ENCODE measurements at regions of chr3 and their contacts with region 1.

Region 1: DNA sequence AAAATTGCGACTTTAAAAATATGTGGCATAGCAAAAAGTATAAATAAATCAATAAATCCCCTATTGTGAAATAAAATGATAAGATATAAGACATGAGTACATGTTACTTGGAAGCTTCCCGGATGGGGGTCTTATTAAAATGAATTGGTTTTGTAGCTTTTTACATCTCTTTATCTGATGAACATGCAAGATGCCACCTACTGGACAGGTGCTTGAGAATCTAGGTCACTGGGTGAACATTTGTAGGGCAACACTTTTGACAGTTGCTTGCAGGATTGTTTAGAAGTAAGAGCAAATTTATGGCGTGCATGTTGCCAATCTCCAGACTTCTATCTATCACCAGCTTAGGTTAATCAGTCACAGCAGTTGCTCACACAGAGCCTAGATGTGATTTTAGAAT is 362.7 kb upstream of the SUCLG2 start:
- DNase-seq: no peak
- H3K4me3 ChIP-seq: no peak overlapping the region
- H3K4me3 Mint-ChIP-seq: no peak overlapping the region
- H3K27ac Mint-ChIP-seq: no peak overlapping the region
- H3K4me1 ChIP-seq: no peaks in the 10 kb centered on the region
- H3K4me1 Mint-ChIP-seq: no peaks in the 10 kb centered on the region
- H3K27me3 ChIP-seq: no peaks in the 10 kb centered on the region
- H3K27me3 Mint-ChIP-seq: no peaks in the 10 kb centered on the region
- CTCF ChIP-seq: peak; percentile 11 to 28

Region 2: GRCh38 chr3:67819447-67819846 is 197.6 kb before region 1 on chr3:
- CTCF ChIA-PET with region 1: no interaction called
- POLR2A ChIA-PET with region 1: no interaction called
- intact Hi-C with region 1: loop called (anchors 5 kb)
- DNase-seq: peak in 1 of 2 experiments; percentile 9
- H3K4me3 ChIP-seq: no peak overlapping the region
- H3K4me3 Mint-ChIP-seq: no peak overlapping the region
- H3K27ac Mint-ChIP-seq: no peak overlapping the region
- H3K4me1 ChIP-seq: no peaks in the 10 kb centered on the region
- H3K4me1 Mint-ChIP-seq: no peaks in the 10 kb centered on the region
- H3K27me3 ChIP-seq: no peaks in the 10 kb centered on the region
- H3K27me3 Mint-ChIP-seq: no peaks in the 10 kb centered on the region
- CTCF ChIP-seq: peak; percentile 13 to 51

Region 3: GRCh38 chr3:67901681-67902080 is 115.4 kb before region 1 on chr3:
- CTCF ChIA-PET with region 1: no interaction called
- POLR2A ChIA-PET with region 1: no interaction called
- intact Hi-C with region 1: loop called (anchors 5 kb)
- DNase-seq: peak in 1 of 2 experiments; percentile 4
- H3K4me3 ChIP-seq: no peak overlapping the region
- H3K4me3 Mint-ChIP-seq: no peak overlapping the region
- H3K27ac Mint-ChIP-seq: no peak overlapping the region
- H3K4me1 ChIP-seq: 0 out of 2 replicates have a peak, but pooled peaks cover under 1% of the 10 kb centered on the region
- H3K4me1 Mint-ChIP-seq: peaks cover 4% of the 10 kb centered on the region
- H3K27me3 ChIP-seq: no peaks in the 10 kb centered on the region
- H3K27me3 Mint-ChIP-seq: no peaks in the 10 kb centered on the region
- CTCF ChIP-seq: peak; percentile 21 to 26

Region 4: GRCh38 chr3:68186733-68187132 is 169.7 kb after region 1 on chr3:
- CTCF ChIA-PET with region 1: no interaction called
- POLR2A ChIA-PET with region 1: no interaction called
- intact Hi-C with region 1: no loop called
- DNase-seq: no peak
- H3K4me3 ChIP-seq: no peak overlapping the region
- H3K4me3 Mint-ChIP-seq: no peak overlapping the region
- H3K27ac Mint-ChIP-seq: no peak overlapping the region
- H3K4me1 ChIP-seq: no peaks in the 10 kb centered on the region
- H3K4me1 Mint-ChIP-seq: no peaks in the 10 kb centered on the region
- H3K27me3 ChIP-seq: no peaks in the 10 kb centered on the region
- H3K27me3 Mint-ChIP-seq: no peaks in the 10 kb centered on the region
- CTCF ChIP-seq: no peak

Measured in Caco-2 (cell line).